ENCODE measurements at regions of chr11 and their contacts with region 1.

Region 1: GRCh38 chr11:33987975-33988580 is 63.5 kb upstream of the CAPRIN1 start:
- DNase-seq: peak; percentile 85
- H3K4me3 ChIP-seq: no peak overlapping the region
- H3K27ac ChIP-seq: no peak overlapping the region
- H3K4me1 ChIP-seq: peaks cover 0 to 10% of the 10 kb centered on the region in 2 experiments; a peak in 1 of 4 replicates
- H3K27me3 ChIP-seq: peaks cover 7% of the 10 kb centered on the region; the same call in 1 of the 2 replicates
- CTCF ChIP-seq: peak; percentile 93
- EP300 ChIP-seq: no peak
- RAD21 ChIP-seq: peak; percentile 86

Region 2: GRCh38 chr11:33808228-33808828 is 179.8 kb before region 1 on chr11:
- CTCF ChIA-PET with region 1: interaction called, 26 read pairs
- POLR2A ChIA-PET with region 1: no interaction called
- DNase-seq: peak; percentile 71
- H3K4me3 ChIP-seq: peak overlapping the region in 1 of 2 experiments; percentile 25; a peak in 1 of 4 replicates
- H3K27ac ChIP-seq: no peak overlapping the region
- H3K4me1 ChIP-seq: no peaks in the 10 kb centered on the region; a peak in 2 of 4 replicates
- H3K27me3 ChIP-seq: peaks cover 6% of the 10 kb centered on the region; the same call in 1 of the 2 replicates
- CTCF ChIP-seq: peak; percentile 88
- EP300 ChIP-seq: no peak
- RAD21 ChIP-seq: peak; percentile 83

Region 3: GRCh38 chr11:33842236-33842915 is 145.7 kb before region 1 on chr11:
- CTCF ChIA-PET with region 1: interaction called, 24 read pairs
- POLR2A ChIA-PET with region 1: no interaction called
- DNase-seq: peak; percentile 53
- H3K4me3 ChIP-seq: peak overlapping the region in 1 of 2 experiments; percentile 35; a peak in 2 of 4 replicates
- H3K27ac ChIP-seq: peak overlapping the region in 1 of 2 experiments; percentile 47; a peak in 2 of 4 replicates
- H3K4me1 ChIP-seq: peaks cover 7 to 9% of the 10 kb centered on the region in 2 experiments; a peak in 3 of 4 replicates
- H3K27me3 ChIP-seq: peaks cover 39% of the 10 kb centered on the region
- CTCF ChIP-seq: no peak
- EP300 ChIP-seq: no peak
- RAD21 ChIP-seq: no peak

Region 4: GRCh38 chr11:33863418-33864172 is 124.5 kb before region 1 on chr11:
- CTCF ChIA-PET with region 1: interaction called, 45 read pairs
- POLR2A ChIA-PET with region 1: no interaction called
- DNase-seq: no peak
- H3K4me3 ChIP-seq: no peak overlapping the region
- H3K27ac ChIP-seq: no peak overlapping the region
- H3K4me1 ChIP-seq: no peaks in the 10 kb centered on the region; a peak in 2 of 4 replicates
- H3K27me3 ChIP-seq: peaks cover 72% of the 10 kb centered on the region
- CTCF ChIP-seq: no peak
- EP300 ChIP-seq: no peak
- RAD21 ChIP-seq: no peak

Region 5: DNA sequence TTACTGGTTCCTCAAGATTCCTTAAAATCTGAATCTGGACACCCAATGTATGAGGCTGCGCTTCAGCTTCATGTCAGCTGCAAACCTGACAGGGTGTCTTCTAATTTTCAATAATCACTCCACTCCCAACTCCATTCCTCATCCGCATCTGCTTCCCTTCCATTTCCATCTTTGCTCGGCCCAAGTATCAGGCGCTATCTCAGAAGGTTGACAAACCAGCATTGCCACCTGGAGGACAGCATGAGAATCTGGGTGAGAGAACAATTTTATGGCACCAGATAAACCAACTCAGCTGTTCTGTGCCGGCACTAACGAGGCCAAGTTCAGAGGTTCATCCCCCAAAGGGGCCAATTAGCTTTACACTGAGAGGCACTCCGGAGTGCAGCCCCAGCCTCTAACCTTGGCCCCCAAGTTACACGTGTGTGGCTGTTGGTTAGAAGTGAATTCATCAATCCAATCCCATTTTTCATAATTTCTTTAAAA is 17.1 kb before region 1 on chr11:
- CTCF ChIA-PET with region 1: interaction called, 30 read pairs
- POLR2A ChIA-PET with region 1: no interaction called
- DNase-seq: peak; percentile 66
- H3K4me3 ChIP-seq: no peak overlapping the region
- H3K27ac ChIP-seq: no peak overlapping the region
- H3K4me1 ChIP-seq: peaks cover 0 to 7% of the 10 kb centered on the region in 2 experiments; a peak in 1 of 4 replicates
- H3K27me3 ChIP-seq: peaks cover 14% of the 10 kb centered on the region; the same call in 1 of the 2 replicates
- CTCF ChIP-seq: peak; percentile 66
- EP300 ChIP-seq: no peak
- RAD21 ChIP-seq: peak; percentile 89

Region 6: GRCh38 chr11:34002268-34002807 is 14.3 kb after region 1 on chr11:
- CTCF ChIA-PET with region 1: interaction called, 36 read pairs
- POLR2A ChIA-PET with region 1: interaction called, 3 read pairs
- DNase-seq: no peak
- H3K4me3 ChIP-seq: no peak overlapping the region
- H3K27ac ChIP-seq: no peak overlapping the region
- H3K4me1 ChIP-seq: peaks cover 6 to 20% of the 10 kb centered on the region in 2 experiments; a peak in 2 of 4 replicates
- H3K27me3 ChIP-seq: peaks cover 15% of the 10 kb centered on the region; the same call in 1 of the 2 replicates
- CTCF ChIP-seq: no peak
- EP300 ChIP-seq: no peak
- RAD21 ChIP-seq: no peak

Region 7: GRCh38 chr11:34013898-34014571 is 26.0 kb after region 1 on chr11:
- CTCF ChIA-PET with region 1: no interaction called
- POLR2A ChIA-PET with region 1: no interaction called
- DNase-seq: no peak
- H3K4me3 ChIP-seq: no peak overlapping the region
- H3K27ac ChIP-seq: no peak overlapping the region
- H3K4me1 ChIP-seq: no peaks in the 10 kb centered on the region
- H3K27me3 ChIP-seq: no peaks in the 10 kb centered on the region; the same call in 1 of the 2 replicates
- CTCF ChIP-seq: no peak
- EP300 ChIP-seq: no peak
- RAD21 ChIP-seq: no peak

Region 8: DNA sequence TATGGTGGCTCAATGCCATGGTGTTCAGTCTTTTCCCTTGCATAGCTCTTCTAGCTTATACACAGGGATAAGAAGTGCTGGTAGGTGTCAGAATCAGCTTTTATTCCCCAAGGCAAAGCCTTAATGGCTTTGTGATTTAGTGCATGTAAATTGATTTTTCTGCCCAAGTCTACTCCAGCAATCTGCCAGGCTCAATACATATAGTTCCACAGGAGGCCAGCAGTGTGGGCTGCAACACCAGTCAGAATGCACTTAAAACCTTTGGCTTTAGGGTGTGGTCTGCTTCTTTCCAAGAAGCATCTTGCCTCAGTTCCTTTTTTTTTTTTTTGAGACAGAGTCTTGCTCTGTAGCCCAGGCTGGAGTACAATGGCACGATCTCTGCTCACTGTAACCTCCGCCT is 48.9 kb after region 1 on chr11:
- CTCF ChIA-PET with region 1: no interaction called
- POLR2A ChIA-PET with region 1: no interaction called
- DNase-seq: no peak
- H3K4me3 ChIP-seq: no peak overlapping the region
- H3K27ac ChIP-seq: no peak overlapping the region
- H3K4me1 ChIP-seq: peaks cover 0 to 17% of the 10 kb centered on the region in 2 experiments; a peak in 1 of 4 replicates
- H3K27me3 ChIP-seq: no peaks in the 10 kb centered on the region
- CTCF ChIP-seq: no peak
- EP300 ChIP-seq: no peak
- RAD21 ChIP-seq: no peak

Measured in SK-N-SH (cell line).